H1 (cell line): ENCODE measurements at regions of chr2 and their contacts with region 1.

Region 1: DNA sequence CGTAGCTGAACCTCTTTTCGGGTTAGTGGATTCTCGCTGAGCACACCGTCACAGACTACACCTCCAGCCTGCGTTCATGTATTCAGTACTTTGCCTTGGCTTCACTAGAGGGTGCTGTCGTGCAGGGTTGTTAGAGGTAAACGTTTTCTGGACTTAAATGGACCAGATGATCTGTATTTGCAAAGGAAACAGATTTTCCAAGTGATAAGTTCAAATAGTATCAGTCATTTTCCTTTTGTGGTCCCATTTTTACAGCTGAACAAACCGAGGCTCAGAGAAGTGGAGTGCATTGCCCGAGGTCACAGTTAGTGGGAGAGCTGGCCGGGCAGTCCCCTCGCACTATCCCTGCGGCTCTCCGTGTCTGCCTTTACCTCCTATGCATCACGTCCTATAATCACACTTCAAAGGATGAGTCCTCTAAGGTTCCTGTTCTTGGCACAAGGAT is 125.9 kb downstream of the MAP4K4 start:
- DNase-seq: peak in 1 of 2 experiments; percentile 72
- H3K4me3 ChIP-seq: no peak overlapping the region
- H3K27ac ChIP-seq: no peak overlapping the region
- H3K4me1 ChIP-seq: peaks cover 0 to 10% (median 7%) of the 10 kb centered on the region in 4 experiments; a peak in 3 of 7 replicates
- H3K27me3 ChIP-seq: no peaks in the 10 kb centered on the region
- CTCF ChIP-seq: peak; percentile 58 to 86 (median 65)
- EP300 ChIP-seq: no peak
- POLR2A ChIP-seq: no peak
- RAD21 ChIP-seq: peak; percentile 56 to 68

Region 2: DNA sequence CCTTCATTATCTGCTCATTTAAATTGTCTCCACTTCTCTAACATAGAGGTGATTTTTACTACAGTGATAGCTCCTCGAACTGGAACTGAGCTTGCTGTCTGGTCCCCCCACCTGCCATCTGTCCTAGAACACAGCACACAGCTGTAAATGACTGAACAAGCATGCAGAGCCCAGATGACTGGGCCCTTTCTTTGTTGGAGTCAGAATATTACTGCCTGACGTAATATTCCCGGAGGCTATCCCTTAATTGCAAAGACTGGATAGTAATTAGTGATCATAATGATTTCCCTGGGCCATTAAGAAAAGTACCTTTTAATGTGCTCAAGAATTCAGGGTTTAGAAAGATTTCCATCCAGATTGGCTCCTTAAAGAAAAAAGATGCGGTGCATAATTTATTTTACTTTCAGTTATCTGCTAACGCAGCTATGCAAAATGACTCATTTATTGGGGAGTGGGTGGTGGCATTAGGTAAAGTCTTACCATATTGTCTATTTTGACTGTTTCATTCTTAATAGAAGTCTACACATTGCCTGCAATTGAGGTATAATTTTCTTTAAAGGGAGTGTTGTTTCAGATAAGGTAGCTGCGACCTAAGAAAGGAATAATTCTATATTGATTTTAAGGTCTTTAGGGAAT is 41.5 kb before region 1 on chr2:
- CTCF ChIA-PET with region 1: interaction called, 12 read pairs
- POLR2A ChIA-PET with region 1: no interaction called
- DNase-seq: no peak
- H3K4me3 ChIP-seq: no peak overlapping the region
- H3K27ac ChIP-seq: no peak overlapping the region
- H3K4me1 ChIP-seq: peaks cover 11 to 24% (median 16%) of the 10 kb centered on the region in 4 experiments
- H3K27me3 ChIP-seq: no peaks in the 10 kb centered on the region
- CTCF ChIP-seq: no peak
- EP300 ChIP-seq: no peak
- POLR2A ChIP-seq: no peak
- RAD21 ChIP-seq: no peak

Region 3: DNA sequence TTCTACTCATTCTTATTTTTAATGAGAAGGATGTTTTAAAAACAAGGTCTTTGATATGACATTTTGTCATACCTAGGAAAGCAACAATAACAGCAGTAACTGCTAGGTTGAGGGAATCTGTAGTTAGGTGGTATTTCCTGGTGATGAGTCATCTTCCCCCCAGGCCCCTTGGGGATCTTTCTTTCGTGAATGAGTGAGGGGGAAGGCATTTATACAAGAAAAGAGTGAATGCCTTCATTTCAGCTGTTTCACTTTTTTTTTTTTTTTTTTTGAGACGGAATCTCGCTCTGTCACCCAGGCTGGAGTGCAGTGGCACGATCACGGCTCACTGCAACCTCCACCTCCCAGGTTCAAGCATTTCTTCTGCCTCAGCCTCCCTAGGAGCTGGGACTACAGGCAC is 17.2 kb before region 1 on chr2:
- CTCF ChIA-PET with region 1: interaction called, 20 read pairs
- POLR2A ChIA-PET with region 1: no interaction called
- DNase-seq: peak in 1 of 2 experiments; percentile 57
- H3K4me3 ChIP-seq: no peak overlapping the region
- H3K27ac ChIP-seq: 0 out of 2 replicates have a peak overlapping the region, but pooled peaks have one; percentile 55
- H3K4me1 ChIP-seq: peaks cover 4 to 23% (median 20%) of the 10 kb centered on the region in 4 experiments
- H3K27me3 ChIP-seq: no peaks in the 10 kb centered on the region
- CTCF ChIP-seq: no peak
- EP300 ChIP-seq: no peak
- POLR2A ChIP-seq: no peak
- RAD21 ChIP-seq: no peak